CD8-positive, alpha-beta memory T cell (primary cell): ENCODE measurements at regions of chr11 and their contacts with region 1.

Region 1: DNA sequence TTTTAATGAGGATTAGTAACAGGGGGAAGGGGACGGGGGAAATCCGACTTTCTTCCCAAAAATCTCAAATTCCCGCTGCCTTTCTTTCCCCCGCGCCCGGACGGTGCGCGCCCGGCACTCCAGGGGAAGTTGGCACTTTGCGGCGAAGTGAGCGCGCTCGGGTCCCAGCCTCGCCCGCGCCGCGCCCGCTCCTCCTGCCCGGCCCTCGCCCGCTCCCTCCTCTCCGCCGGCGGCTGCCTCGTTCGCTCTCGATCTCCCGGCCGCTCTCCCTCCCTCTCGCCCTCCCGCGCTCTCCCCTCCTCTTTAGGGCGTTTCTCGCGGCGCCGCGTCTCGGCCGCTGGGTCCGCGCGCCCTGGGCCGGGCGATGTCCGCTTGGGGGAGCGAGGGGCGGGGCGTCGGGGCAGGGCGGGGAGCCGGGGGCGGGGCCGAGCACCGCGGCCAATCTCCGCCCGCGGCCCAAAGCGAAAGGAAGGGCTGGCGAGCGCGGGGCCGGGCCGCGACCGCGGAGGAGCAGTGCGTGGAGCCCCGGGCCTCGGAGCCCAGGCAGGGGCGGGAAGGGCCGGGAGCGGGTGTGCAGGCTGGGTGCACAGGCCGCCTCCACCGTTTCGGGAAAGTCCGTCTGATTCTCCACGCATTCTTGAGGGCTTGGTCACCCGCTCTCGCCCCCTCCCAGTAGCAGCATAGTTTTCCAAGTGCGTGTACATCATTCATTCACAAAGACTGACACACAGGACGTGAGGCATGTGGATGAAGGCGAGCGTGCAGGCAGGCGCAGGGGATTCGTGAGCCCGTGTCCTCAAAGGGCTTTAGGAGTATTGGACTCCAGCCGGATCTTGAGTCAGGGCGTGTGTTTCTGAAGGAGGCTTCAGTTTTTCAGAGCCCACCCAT is 65.1 kb downstream of the ETS1 start:
- DNase-seq: peak; percentile 78 to 90 (median 86)
- H3K4me3 ChIP-seq: peak overlapping the region; percentile 97
- H3K4me3 Mint-ChIP-seq: peak overlapping the region; percentile 95 to 100 (median 98)
- H3K27ac ChIP-seq: peak overlapping the region; percentile 92
- H3K27ac Mint-ChIP-seq: peak overlapping the region; percentile 91 to 99 (median 98)
- H3K4me1 ChIP-seq: peaks cover 40% of the 10 kb centered on the region
- H3K4me1 Mint-ChIP-seq: peaks cover 45 to 50% (median 49%) of the 10 kb centered on the region in 3 donors
- H3K27me3 ChIP-seq: no peaks in the 10 kb centered on the region
- H3K27me3 Mint-ChIP-seq: peaks cover 0 to 2% of the 10 kb centered on the region in 2 donors

Region 2: DNA sequence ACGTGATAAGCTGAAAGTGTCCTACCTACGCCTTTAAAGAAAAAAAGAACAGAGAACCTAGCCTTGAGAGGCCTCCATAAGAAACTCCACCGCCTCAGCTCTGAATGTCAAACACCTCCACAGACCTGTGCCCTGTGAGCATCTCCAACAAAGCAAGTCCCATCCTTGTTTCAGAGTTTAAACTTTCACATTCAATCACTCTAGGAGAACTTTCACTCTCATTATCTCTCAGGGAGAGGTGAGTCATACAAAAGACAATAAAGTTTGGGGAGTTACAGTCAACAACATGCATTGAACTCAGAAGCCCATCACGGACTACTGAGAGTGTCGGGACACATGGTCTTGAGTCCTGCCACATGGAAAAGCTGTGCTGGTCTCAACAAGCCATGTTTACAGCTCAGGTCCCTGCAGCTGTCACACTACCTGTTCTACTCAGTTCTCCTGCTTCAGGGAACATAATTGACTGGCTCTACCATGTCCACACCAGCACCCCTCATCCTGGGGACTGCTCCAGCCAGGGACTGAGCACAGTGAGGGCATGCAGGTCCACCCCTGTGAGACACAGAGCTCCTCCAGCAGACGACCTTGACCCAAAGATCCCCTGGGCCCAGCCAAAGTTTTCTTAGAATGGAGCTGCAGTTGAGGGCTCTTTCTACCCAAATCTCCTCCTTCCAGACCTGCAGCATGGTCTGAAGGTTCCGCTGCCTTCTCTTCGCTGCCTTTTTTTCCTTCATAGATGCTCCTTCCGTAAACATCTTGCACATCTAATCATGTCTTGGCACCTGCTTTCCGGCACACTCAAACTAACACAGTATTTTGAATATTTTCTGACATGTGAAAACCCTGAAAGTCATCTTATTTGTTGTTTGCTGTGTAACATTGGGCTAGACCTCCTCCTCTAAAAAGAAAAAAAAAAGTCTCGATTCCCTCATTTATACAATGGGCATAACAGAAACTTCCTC is 49.9 kb before region 1 on chr11:
- CTCF ChIA-PET with region 1: interaction called, 18 read pairs
- POLR2A ChIA-PET with region 1: interaction called, 11 read pairs
- DNase-seq: peak in 3 of 5 donors; percentile 48 to 64 (median 63)
- H3K4me3 ChIP-seq: peak overlapping the region; percentile 69
- H3K4me3 Mint-ChIP-seq: peak overlapping the region; percentile 62 to 86 (median 77)
- H3K27ac ChIP-seq: peak overlapping the region; percentile 56
- H3K27ac Mint-ChIP-seq: peak overlapping the region; percentile 89 to 99 (median 96)
- H3K4me1 ChIP-seq: peaks cover 96% of the 10 kb centered on the region
- H3K4me1 Mint-ChIP-seq: peaks cover 99 to 100% (median 100%) of the 10 kb centered on the region in 3 donors
- H3K27me3 ChIP-seq: no peaks in the 10 kb centered on the region
- H3K27me3 Mint-ChIP-seq: peaks cover 0 to 1% of the 10 kb centered on the region in 2 donors

Region 3: GRCh38 chr11:128501632-128502549 is 20.4 kb before region 1 on chr11:
- CTCF ChIA-PET with region 1: interaction called, 22 read pairs
- POLR2A ChIA-PET with region 1: interaction called, 69 read pairs
- DNase-seq: no peak
- H3K4me3 ChIP-seq: peak overlapping the region; percentile 37
- H3K4me3 Mint-ChIP-seq: peak overlapping the region; percentile 82 to 99 (median 90)
- H3K27ac ChIP-seq: no peak overlapping the region
- H3K27ac Mint-ChIP-seq: peak overlapping the region; percentile 88 to 99 (median 98)
- H3K4me1 ChIP-seq: peaks cover 100% of the 10 kb centered on the region
- H3K4me1 Mint-ChIP-seq: peaks cover 97 to 100% (median 99%) of the 10 kb centered on the region in 3 donors
- H3K27me3 ChIP-seq: no peaks in the 10 kb centered on the region
- H3K27me3 Mint-ChIP-seq: peaks cover 0 to 2% of the 10 kb centered on the region in 2 donors

Region 4: DNA sequence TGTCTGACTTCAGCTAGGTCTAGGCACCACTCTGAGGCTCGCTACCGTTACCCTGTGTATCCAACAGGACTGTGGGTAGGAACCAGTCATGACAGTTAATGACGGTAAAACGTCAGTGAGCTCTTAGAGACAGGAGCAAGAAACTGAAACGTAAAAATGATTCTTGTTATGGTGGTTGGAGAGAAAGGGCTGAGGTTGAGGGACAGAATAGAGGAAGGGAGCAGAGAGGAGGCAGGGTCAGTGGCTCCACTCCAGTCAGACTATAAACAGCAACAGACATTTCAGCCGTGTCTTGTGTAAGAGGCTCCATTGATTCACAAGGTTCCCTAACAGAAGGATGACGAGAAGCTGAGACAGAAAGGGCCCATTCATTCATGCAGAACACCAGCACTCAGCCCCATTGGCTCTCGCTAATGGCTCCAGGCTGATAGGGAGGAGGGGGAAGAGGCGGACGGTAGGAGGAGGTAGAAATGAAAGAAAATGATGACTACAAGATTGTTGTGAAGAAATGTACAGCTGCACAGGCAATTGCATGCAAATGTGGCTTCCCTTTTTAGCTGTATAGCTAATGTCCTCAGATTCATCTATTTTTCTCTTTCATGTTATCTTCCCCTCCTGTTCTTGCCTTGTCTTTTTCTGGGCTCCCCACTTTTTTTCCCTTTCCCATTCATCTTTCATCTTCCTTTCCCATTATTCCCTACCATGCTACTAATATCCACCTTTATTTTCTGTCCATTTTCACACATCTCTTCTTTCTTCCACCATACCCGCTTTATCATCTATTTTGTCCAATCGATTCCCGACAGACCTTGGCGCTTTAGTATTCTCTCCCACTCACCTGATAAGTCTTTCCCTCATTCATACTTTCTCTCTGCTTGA is 30.7 kb after region 1 on chr11:
- CTCF ChIA-PET with region 1: interaction called, 4 read pairs
- POLR2A ChIA-PET with region 1: interaction called, 15 read pairs
- DNase-seq: no peak
- H3K4me3 ChIP-seq: no peak overlapping the region
- H3K4me3 Mint-ChIP-seq: peak overlapping the region in 5 of 7 donors; percentile 44 to 71 (median 61)
- H3K27ac ChIP-seq: peak overlapping the region; percentile 55
- H3K27ac Mint-ChIP-seq: peak overlapping the region; percentile 76 to 98 (median 94)
- H3K4me1 ChIP-seq: peaks cover 50% of the 10 kb centered on the region
- H3K4me1 Mint-ChIP-seq: peaks cover 53 to 65% (median 61%) of the 10 kb centered on the region in 3 donors
- H3K27me3 ChIP-seq: no peaks in the 10 kb centered on the region
- H3K27me3 Mint-ChIP-seq: no peaks in the 10 kb centered on the region